HepG2 (cell line): ENCODE measurements at regions of chrX and their contacts with region 1.

Region 1: GRCh38 chrX:38375891-38376290 is 23.5 kb downstream of the OTC start:
- DNase-seq: no peak
- ATAC-seq: peak; percentile 48; the same call in 1 of the 3 replicates
- H3K4me3 ChIP-seq: no peak overlapping the region
- H3K27ac ChIP-seq: no peak overlapping the region
- H3K4me1 ChIP-seq: peaks cover 15% of the 10 kb centered on the region; the same call in 1 of the 2 replicates
- H3K27me3 ChIP-seq: no peaks in the 10 kb centered on the region
- CTCF ChIP-seq: 0 out of 2 replicates have a peak, but pooled peaks have one; percentile 21
- EP300 ChIP-seq: no peak
- POLR2A ChIP-seq: no peak
- RAD21 ChIP-seq: no peak

Region 2: DNA sequence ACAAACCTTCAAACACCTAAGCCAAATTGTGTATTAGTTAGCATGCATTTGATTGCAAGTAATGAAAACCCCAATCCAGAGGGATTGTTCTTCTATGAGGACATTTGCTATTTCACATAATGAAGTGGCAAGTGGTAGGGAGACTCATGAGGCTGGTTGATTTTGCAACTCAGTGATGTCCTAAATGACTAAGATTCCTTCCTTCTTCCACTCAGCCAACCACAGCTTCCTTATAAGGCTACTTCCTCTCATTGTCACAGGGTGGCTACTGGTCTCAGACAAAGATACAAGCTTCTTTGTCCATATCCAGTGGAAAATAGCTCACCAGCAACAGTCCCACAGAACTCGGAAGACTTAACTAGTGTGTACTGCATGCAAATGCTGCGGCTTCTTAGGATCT is 28.8 kb before region 1 on chrX:
- CTCF ChIA-PET with region 1: no interaction called
- POLR2A ChIA-PET with region 1: no interaction called
- in situ Hi-C with region 1: no loop called
- intact Hi-C with region 1: loop called (anchors 2 kb)
- DNase-seq: no peak
- ATAC-seq: no peak
- H3K4me3 ChIP-seq: no peak overlapping the region
- H3K27ac ChIP-seq: no peak overlapping the region
- H3K4me1 ChIP-seq: peaks cover 75% of the 10 kb centered on the region
- H3K27me3 ChIP-seq: no peaks in the 10 kb centered on the region
- CTCF ChIP-seq: no peak
- EP300 ChIP-seq: no peak
- POLR2A ChIP-seq: no peak
- RAD21 ChIP-seq: no peak